Dorsolateral prefrontal cortex (tissue), 120 donors: ENCODE measurements at regions of chr3 and their contacts with region 1.

Region 1: GRCh38 chr3:58463181-58463941 is 28.5 kb upstream of the KCTD6 start:
- DNase-seq: peak; percentile 50 to 82 (median 72)
- H3K4me3 ChIP-seq: peak overlapping the region in 47 of 59 donors; percentile 5 to 50 (median 28)
- H3K27ac ChIP-seq: peak overlapping the region in 12 of 59 donors; percentile 6 to 68 (median 32)
- H3K27me3 ChIP-seq: no peaks in the 10 kb centered on the region
- CTCF ChIP-seq: peak; percentile 53 to 88 (median 77)

Region 2: GRCh38 chr3:58485801-58486435 is 22.6 kb after region 1 on chr3:
- intact Hi-C with region 1: loop called in 1 of 2 experiments (anchors 1 kb)
- DNase-seq: no peak
- H3K4me3 ChIP-seq: no peak overlapping the region
- H3K27ac ChIP-seq: peak overlapping the region in 17 of 59 donors; percentile 0 to 90 (median 66)
- H3K27me3 ChIP-seq: no peaks in the 10 kb centered on the region
- CTCF ChIP-seq: no peak